ENCODE measurements at regions of chr14 and their contacts with region 1.

Region 1: DNA sequence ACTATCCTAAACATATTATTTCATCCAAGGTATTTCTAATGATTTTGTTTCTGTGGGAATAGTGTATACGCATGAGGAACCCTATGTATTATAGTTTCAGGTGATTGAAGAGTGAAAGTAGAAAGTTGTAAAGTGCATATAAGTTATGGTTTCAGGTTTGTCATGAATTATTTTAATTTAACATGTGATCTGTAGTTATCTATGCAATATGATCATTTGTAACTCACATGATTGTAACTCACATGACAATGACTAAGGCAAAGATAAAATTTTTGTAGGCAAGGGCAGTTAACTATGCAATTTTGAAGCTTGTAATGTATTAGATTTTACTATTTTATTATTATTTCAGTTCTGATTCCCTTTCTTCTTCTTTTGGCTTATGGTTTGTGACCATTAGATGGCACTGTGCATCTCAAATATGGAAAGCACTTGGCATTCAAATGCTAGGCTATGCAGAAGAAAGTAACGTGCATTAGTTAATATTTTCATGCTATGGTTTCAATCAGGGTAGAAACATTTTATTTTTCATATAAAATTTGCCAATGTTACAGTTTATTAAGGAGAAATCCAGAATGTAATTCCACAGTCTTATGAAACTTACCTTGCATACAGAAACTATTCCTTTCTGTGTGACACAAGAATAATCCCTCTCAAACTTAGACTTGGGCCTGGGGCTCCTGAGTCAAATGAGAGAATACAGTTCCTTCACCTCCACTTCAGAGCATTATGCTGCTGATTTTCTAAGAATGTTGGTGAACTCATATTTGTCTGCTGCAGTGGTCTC is 15.8 kb upstream of the TMEM30B start:
- DNase-seq: peak; percentile 87
- ATAC-seq: peak; percentile 84
- H3K4me3 ChIP-seq: no peak overlapping the region
- H3K27ac ChIP-seq: no peak overlapping the region
- H3K4me1 ChIP-seq: no peaks in the 10 kb centered on the region
- H3K27me3 ChIP-seq: no peaks in the 10 kb centered on the region
- CTCF ChIP-seq: peak; percentile 96

Region 2: GRCh38 chr14:60656686-60657455 is 640.0 kb before region 1 on chr14:
- CTCF ChIA-PET with region 1: no interaction called
- POLR2A ChIA-PET with region 1: interaction called, 25 read pairs
- intact Hi-C with region 1: no loop called
- DNase-seq: peak; percentile 76
- ATAC-seq: peak; percentile 59
- H3K4me3 ChIP-seq: peak overlapping the region; percentile 80
- H3K27ac ChIP-seq: peak overlapping the region; percentile 19
- H3K4me1 ChIP-seq: peaks cover 31% of the 10 kb centered on the region
- H3K27me3 ChIP-seq: no peaks in the 10 kb centered on the region
- CTCF ChIP-seq: peak; percentile 83

Region 3: GRCh38 chr14:61051051-61051450 is 245.9 kb before region 1 on chr14:
- CTCF ChIA-PET with region 1: no interaction called
- POLR2A ChIA-PET with region 1: no interaction called
- intact Hi-C with region 1: no loop called
- DNase-seq: no peak
- ATAC-seq: no peak
- H3K4me3 ChIP-seq: no peak overlapping the region
- H3K27ac ChIP-seq: no peak overlapping the region
- H3K4me1 ChIP-seq: no peaks in the 10 kb centered on the region
- H3K27me3 ChIP-seq: no peaks in the 10 kb centered on the region
- CTCF ChIP-seq: no peak

Region 4: GRCh38 chr14:61229475-61229888 is 67.4 kb before region 1 on chr14:
- CTCF ChIA-PET with region 1: no interaction called
- POLR2A ChIA-PET with region 1: no interaction called
- intact Hi-C with region 1: no loop called
- DNase-seq: peak; percentile 22
- ATAC-seq: peak; percentile 62
- H3K4me3 ChIP-seq: no peak overlapping the region
- H3K27ac ChIP-seq: no peak overlapping the region
- H3K4me1 ChIP-seq: no peaks in the 10 kb centered on the region
- H3K27me3 ChIP-seq: no peaks in the 10 kb centered on the region
- CTCF ChIP-seq: no peak

Region 5: DNA sequence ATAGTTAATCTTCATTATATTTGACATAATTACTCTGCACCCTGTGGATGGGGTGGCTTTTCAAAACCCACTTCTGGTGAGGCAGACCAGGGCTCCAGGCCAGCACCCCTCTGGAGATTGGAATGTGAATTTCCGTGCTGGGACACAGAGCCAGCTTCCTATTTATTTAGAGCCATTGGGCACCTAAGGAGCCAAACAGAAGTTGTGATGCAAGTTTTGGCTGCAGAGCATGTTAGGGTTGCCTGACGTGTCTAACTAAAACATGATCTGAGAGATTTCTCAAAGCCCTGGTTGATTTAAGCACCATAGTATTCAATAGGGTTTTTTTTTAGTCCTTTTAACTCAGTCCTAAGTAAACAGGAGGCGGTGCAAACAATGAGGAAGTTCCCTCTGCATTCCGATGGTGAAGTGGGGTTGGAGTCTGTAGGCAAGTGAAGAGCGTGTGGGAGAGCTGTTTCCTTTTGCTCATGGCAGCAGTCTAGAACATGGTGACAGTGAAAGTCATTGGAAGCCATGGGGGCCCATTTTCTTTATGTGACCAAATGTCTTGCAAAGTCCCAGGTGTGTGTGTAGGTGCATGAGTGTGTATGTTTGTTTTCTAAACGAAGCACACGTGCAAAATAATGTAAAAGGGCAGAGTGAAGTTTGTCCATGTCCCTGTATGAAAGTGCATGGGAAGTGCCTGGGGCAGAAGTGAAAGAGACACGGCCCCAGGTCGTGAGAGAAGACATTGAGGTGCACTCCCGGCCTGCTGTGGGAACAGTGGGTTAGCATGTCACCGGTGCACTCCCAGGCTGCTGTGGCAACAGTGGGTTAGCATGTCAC is 142.2 kb after region 1 on chr14:
- CTCF ChIA-PET with region 1: no interaction called
- POLR2A ChIA-PET with region 1: no interaction called
- intact Hi-C with region 1: loop called (anchors 5 kb)
- DNase-seq: peak; percentile 96
- ATAC-seq: peak; percentile 89
- H3K4me3 ChIP-seq: peak overlapping the region; percentile 48
- H3K27ac ChIP-seq: peak overlapping the region; percentile 76
- H3K4me1 ChIP-seq: peaks cover 32% of the 10 kb centered on the region
- H3K27me3 ChIP-seq: no peaks in the 10 kb centered on the region
- CTCF ChIP-seq: no peak

Region 6: DNA sequence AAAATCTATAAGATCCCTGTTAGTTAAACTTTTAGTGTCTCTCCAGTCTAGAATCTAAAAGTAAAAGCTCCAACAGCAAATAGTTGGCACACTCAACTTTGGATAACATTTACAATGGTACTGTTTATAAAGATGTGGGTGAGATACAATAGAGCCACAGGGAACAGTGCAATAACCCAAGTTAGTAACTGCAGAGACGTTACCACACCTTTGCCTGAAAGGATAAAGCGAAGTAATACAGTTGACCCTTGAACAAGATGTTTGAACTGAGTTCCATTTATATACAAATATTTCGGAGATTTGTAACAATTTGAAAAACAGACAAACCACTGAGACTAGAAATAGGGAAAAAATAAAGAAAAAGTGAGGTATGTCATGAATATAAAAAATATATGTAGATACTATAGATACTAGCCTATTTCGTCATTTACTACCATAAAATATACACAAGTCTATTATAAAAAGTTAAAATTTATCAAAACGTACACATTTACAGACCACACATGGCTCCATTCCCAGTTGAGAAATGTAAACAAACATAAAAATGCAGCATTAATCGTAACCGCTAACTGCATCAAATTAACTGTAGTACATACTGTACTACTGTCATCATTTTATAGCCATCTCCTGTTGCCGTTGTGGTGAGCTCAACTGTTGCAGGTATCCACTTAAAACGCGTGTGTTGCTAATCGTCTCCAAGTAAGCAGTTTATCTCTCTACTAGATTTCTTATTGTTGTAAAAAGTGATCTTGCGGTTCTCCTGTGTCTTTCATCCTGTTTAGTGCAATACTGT is 341.9 kb after region 1 on chr14:
- CTCF ChIA-PET with region 1: no interaction called
- POLR2A ChIA-PET with region 1: no interaction called
- intact Hi-C with region 1: loop called (anchors 10 kb)
- DNase-seq: peak; percentile 92
- ATAC-seq: peak; percentile 90
- H3K4me3 ChIP-seq: 0 out of 2 replicates have a peak overlapping the region, but pooled peaks have one; percentile 3
- H3K27ac ChIP-seq: peak overlapping the region; percentile 75
- H3K4me1 ChIP-seq: peaks cover 36% of the 10 kb centered on the region
- H3K27me3 ChIP-seq: no peaks in the 10 kb centered on the region
- CTCF ChIP-seq: no peak

Region 7: GRCh38 chr14:62126879-62127478 is 830.1 kb after region 1 on chr14:
- CTCF ChIA-PET with region 1: no interaction called
- POLR2A ChIA-PET with region 1: no interaction called
- intact Hi-C with region 1: loop called (anchors 10 kb)
- DNase-seq: peak; percentile 85
- ATAC-seq: peak; percentile 88
- H3K4me3 ChIP-seq: no peak overlapping the region
- H3K27ac ChIP-seq: peak overlapping the region; percentile 15; the same call in 1 of the 2 replicates
- H3K4me1 ChIP-seq: peaks cover 5% of the 10 kb centered on the region; the same call in 1 of the 2 replicates
- H3K27me3 ChIP-seq: no peaks in the 10 kb centered on the region
- CTCF ChIP-seq: peak; percentile 94

Measured in PC-3 (cell line).